ENCODE measurements at regions of chr10 and their contacts with region 1.

Region 1: GRCh38 chr10:119650692-119651513 is at the start of gene BAG3:
- DNase-seq: peak; percentile 34 to 86 (median 72)
- ATAC-seq: peak; percentile 57 to 64
- H3K4me3 Mint-ChIP-seq: peak within 1 kb of the TSS; percentile 94 to 99 (median 97)
- H3K27ac Mint-ChIP-seq: peak within 1 kb of the TSS; percentile 90 to 99 (median 97)
- H3K4me1 Mint-ChIP-seq: peaks cover 28 to 45% (median 44%) of the 10 kb centered on the region in 4 donors
- H3K27me3 Mint-ChIP-seq: no peaks in the 10 kb centered on the region
- polyA plus RNA-seq, gene BAG3: 5.1 to 26.5 (median 12.5) TPM

Region 2: DNA sequence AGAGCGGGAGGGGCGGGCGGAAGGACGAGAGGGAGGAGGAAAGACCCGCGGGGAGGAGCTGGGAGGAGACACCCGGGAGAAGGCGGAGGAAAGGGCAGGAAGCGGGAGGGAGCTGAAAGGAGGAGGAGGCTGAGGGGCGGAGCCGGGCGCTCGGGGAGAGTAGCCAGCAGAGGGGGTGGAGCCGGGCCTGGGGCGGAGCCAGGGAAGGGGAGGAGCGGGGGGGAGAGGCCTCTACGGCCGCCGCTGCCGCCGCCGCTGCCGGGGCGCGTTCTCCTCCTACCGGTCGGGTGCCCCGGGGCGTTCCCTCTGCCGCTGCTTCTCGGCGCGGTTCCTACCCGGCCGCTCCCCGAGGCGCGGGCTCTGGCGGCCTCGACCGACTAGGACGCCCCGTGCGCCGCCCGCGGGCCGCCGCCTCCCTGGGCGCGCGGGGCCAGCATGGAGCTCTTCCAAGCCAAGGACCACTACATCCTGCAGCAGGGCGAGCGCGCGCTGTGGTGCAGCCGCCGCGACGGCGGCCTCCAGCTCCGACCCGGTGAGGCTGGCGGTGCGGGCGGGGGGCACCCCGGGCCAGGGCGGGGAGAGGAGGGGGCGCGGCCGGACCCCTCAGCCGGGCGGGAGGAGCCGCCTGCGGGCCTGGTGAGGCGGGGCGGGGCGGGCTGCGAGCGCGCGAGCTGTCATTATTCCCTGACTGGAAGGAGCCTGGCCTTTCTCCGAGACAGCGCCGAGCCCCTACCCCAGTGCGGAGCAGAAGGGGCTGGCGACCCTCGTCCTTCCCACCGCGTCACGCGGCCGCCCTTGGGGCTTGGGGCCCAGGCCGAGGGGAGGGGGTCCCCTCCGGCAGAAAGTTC is 75.1 kb after region 1 on chr10 and contains the start of gene INPP5F:
- POLR2A ChIA-PET with region 1: interaction called, 10 read pairs
- DNase-seq: peak; percentile 90 to 99 (median 96)
- ATAC-seq: peak; percentile 88 to 92
- H3K4me3 Mint-ChIP-seq: peak within 1 kb of the TSS; percentile 81 to 94 (median 91)
- H3K27ac Mint-ChIP-seq: peak within 1 kb of the TSS; percentile 27 to 93 (median 81)
- H3K4me1 Mint-ChIP-seq: peaks cover 5 to 41% (median 26%) of the 10 kb centered on the region in 4 donors
- H3K27me3 Mint-ChIP-seq: no peaks in the 10 kb centered on the region
- polyA plus RNA-seq, gene INPP5F: 1.4 to 2.5 (median 2.4) TPM

Region 3: DNA sequence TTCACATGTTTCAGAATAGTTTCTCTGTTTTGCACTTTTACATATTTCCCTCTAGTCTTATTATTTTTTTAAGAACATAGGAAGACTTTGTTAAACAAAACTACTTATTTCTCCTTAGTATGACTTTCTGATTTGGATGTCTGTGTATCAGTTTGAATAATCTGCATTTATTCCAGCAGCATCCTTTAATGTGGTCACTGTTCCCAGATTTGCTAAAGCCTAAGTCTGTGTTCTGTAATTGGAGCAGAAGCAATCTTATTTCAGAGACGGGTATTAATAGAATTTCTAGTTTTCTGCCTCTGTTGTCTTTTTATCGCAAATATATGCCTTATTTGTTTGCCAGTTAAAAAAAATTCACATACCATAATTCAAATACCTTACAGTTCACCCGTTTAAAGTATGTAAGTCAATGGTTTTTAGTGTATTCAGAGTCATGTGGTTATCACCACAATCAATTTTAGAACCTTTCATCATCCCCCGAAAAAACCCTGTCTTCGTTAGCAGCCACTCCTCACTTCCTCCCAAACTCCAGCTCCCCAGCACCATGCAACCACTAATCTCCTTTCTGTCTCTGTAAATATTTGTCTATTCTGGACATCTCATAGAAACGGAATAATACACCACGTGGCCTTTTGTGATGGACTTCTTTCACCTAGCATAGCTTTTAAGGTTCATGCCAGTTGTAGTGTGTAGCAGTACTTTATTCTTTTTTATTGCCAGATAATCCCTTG is 133.6 kb after region 1 on chr10:
- POLR2A ChIA-PET with region 1: no interaction called
- DNase-seq: peak in 3 of 10 donors; percentile 21 to 51 (median 48)
- ATAC-seq: peak; percentile 63 to 98
- H3K4me3 Mint-ChIP-seq: peak overlapping the region in 9 of 10 donors; percentile 1 to 46 (median 37)
- H3K27ac Mint-ChIP-seq: peak overlapping the region in 6 of 10 donors; percentile 9 to 69 (median 14)
- H3K4me1 Mint-ChIP-seq: peaks cover 13 to 42% (median 25%) of the 10 kb centered on the region in 4 donors
- H3K27me3 Mint-ChIP-seq: no peaks in the 10 kb centered on the region

Measured in naive thymus-derived CD8-positive, alpha-beta T cell (primary cell).